Dendritic cell treated with granulocyte-macrophage colony-stimulating factor and Interleukin-4, amounts not matched to agents 40 ng/mL and 50 ng/mL, for 4 days (primary cell): ENCODE measurements at regions of chr3 and their contacts with region 1.

Region 1: DNA sequence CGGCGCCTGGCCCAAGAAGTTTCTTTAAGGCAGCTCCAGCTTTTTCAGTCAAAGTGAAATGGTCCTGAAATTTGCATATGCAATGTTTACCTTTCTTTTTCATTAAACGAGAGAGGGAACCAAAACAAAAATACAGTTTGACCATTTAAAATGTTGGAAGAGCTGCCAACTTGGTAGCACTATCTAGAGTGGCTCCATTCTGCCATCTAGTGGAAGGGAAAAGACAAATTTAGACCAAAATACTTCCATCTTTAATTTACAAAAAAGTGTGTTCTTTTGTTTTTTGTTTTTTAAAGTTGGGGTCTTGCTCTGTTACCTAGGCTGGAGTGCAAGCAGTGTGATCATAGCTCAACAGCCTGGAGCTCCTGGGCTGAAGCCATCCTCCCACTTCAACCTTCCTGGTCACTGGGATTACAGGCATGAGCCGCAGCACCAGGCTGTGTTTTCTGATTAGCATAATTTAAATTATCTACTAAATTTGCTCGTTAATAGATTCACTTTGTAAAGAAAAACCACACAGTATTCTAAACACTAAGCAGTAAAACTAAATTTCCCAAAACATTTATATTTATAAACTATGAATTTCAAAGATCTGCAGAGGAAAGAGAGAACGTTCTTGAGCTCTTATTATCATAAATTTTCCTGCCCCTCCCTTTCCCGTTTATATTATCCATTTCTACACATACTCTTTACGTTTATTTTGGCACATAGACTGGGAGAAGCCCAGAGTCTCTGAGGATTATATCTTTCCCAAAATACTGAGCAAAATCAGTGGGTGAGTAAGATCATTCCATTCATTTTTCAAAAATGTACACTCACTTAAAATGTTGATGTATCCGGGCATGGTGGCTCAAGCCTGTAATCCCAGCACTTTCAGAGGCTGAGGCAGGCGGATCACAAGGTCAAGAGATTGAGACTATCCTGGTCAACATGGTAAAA is 15.4 kb upstream of the RFC4 start:
- H3K4me3 Mint-ChIP-seq: no peak overlapping the region
- H3K27ac Mint-ChIP-seq: no peak overlapping the region
- H3K4me1 Mint-ChIP-seq: peaks cover 50% of the 10 kb centered on the region
- H3K27me3 Mint-ChIP-seq: peaks cover 28% of the 10 kb centered on the region

Region 2: DNA sequence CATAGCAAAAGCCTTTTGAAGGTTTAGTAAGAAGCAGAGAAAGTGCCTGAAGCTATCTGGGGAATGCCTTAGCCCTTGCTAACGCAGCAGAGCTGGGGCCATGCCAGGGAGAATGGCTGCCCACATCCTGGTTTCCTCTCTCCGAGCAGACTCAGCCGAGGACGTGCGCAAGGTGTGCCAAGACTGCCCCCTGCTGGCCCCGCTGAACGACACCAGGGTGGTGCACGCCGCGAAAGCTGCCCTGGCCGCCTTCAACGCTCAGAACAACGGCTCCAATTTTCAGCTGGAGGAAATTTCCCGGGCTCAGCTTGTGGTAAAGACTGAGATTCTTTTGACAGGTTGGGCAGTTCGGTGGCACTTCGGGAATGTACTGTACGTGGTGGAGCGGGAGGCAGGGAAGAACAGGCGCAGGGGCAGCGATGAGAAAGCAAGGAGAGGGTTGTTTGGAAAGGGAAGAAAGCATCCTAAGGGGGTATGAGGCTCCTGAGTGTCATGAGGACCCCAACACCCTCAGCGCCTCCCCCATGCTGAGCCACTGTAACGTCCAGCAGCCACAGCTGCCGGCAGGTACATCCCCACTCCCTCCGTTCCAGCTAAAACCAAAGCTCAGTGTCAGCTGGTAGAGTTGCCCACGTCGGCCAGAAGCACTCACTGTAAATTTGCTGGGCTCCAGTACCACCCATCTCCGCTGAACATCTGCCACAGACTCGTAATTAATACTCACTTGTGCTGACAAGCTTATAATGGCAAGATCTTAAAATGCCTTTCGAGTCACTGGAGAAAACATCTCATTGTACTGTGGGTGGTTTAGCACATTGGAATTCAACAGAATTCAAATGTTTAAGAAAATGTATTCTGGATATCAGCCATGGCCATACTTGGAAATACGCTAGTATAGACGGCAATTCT is 204.4 kb before region 1 on chr3:
- intact Hi-C with region 1: loop called (anchors 2 kb)
- H3K4me3 Mint-ChIP-seq: peak overlapping the region; percentile 60
- H3K27ac Mint-ChIP-seq: no peak overlapping the region
- H3K4me1 Mint-ChIP-seq: peaks cover 14% of the 10 kb centered on the region
- H3K27me3 Mint-ChIP-seq: peaks cover 46% of the 10 kb centered on the region

Region 3: GRCh38 chr3:186789554-186790260 is 32.0 kb before region 1 on chr3:
- intact Hi-C with region 1: loop called (anchors 5 kb)
- H3K4me3 Mint-ChIP-seq: no peak overlapping the region
- H3K27ac Mint-ChIP-seq: no peak overlapping the region
- H3K4me1 Mint-ChIP-seq: peaks cover 26% of the 10 kb centered on the region
- H3K27me3 Mint-ChIP-seq: no peaks in the 10 kb centered on the region